H1 (cell line): ENCODE measurements at regions of chr2 and their contacts with region 1.

Region 1: DNA sequence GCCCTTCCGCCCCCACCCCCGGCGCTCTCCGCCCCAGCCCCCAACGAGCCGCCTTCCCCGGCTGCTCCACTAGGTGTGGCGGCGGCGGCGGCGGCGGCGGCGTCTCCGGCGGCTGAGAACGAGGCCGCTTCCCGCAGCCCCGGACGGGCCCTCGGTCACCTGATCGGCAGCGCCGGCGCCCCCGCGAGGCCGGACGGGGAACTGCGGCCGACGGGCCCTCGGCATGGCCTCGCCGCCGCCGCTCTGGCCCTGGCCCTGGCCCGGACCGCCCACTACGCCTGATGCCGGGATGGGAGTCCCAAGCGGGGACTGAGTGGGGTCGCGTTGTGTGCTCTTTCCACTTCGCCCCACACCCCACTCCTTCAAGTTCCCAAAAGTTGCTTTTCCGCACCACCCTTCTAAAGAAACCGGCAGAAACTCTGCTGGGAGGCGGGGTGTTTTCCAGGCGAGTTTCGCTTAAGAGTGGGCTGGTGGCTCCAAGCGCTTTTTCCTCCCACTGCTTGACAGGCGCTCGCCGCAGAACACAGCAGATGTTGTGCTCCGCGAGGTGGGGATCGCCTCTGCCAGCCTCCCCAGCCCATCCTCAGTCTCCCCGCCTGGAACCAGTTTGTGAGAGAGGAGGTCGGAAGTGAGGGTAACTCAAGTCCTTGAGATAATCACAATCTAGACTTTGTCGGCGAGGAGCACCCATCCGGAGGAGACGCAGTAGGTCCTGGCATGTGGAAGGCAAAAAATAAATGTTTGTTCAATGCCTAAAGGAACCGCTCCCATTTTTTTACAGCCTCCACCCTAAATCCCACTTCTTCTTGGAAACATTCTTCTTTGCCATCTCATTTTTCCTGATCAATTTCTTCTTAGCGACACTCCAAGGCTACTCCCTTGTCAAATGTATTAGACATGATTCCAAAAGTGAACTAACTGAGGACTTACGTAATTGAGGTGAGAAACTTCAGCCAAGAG is at the start of gene NCKAP1:
- DNase-seq: peak; percentile 44 to 99
- H3K4me3 ChIP-seq: peak within 1 kb of the TSS; percentile 80 to 96 (median 90)
- H3K27ac ChIP-seq: peak within 1 kb of the TSS; percentile 79
- H3K4me1 ChIP-seq: peaks cover 0 to 3% (median 1%) of the 10 kb centered on the region in 4 experiments; a peak in 3 of 7 replicates
- H3K27me3 ChIP-seq: no peaks in the 10 kb centered on the region
- CTCF ChIP-seq: peak; percentile 68 to 91 (median 74)
- EP300 ChIP-seq: no peak
- POLR2A ChIP-seq: peak in 1 of 2 experiments; percentile 16
- RAD21 ChIP-seq: peak; percentile 8 to 55; a peak in 3 of 4 replicates
- total RNA-seq, gene NCKAP1: 153 and 173 TPM in 2 replicates

Region 2: DNA sequence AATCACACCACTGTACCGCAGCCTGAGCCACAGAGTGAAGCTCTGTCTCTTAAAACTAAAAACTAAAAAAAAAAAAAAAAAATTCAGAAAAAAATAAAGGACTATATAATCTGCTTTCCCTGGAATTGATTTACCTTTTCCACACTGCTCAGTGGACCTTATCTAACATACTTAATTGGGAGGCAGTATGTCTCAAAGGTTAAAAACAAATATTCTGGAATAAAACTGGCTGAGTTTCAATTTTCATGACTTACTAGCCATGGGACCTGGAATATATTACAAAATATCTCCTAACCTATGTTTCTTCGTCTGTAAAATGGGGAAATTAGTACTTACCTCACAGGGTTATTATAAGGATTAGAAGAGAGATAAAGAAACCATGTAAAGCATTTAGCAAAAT is 12.2 kb before region 1 on chr2:
- CTCF ChIA-PET with region 1: interaction called, 13 read pairs
- POLR2A ChIA-PET with region 1: interaction called, 5 read pairs
- DNase-seq: no peak
- H3K4me3 ChIP-seq: no peak overlapping the region
- H3K27ac ChIP-seq: no peak overlapping the region
- H3K4me1 ChIP-seq: peaks cover 0 to 2% (median 0%) of the 10 kb centered on the region in 4 experiments; a peak in 2 of 7 replicates
- H3K27me3 ChIP-seq: no peaks in the 10 kb centered on the region
- CTCF ChIP-seq: no peak
- EP300 ChIP-seq: no peak
- POLR2A ChIP-seq: no peak
- RAD21 ChIP-seq: no peak

Region 3: DNA sequence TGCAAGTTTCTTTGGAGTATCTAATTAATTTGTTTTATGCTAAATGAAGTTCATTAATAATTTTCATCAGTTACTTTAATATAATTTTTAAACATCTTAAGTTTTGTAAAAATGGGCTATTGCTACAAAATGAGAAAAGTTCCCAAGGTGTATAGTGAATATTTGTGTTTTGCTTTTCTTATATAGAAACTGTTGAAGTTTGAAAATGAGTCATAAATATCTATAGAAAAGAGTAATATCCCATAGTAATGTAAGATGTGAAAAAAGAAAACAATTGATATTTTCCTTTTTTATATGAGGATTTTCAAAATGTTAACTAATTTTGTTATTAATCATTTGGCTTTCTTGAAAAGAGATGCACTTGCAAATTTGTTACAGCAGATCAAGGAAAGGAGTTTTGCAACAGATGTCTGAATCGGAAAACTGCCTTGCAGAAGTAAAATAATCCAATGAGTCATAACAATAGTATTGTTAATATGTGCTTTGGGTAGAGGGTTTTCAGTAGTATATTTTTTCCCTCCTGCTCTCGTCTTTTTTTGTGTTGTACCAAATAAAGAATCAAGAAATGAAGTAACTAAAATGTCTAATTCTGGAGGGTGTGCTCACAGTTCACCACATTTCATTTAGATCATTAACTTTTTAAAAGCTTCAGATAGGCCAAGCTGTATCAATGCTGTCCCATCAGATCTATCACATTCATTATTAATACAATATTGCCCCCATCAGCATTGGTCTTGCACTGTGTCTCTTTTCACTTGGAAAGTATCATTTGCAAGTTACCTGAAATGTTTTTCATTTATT is 55.4 kb after region 1 on chr2:
- CTCF ChIA-PET with region 1: no interaction called
- POLR2A ChIA-PET with region 1: no interaction called
- DNase-seq: no peak
- H3K4me3 ChIP-seq: no peak overlapping the region
- H3K27ac ChIP-seq: no peak overlapping the region
- H3K4me1 ChIP-seq: peaks cover 0 to 4% (median 2%) of the 10 kb centered on the region in 4 experiments; a peak in 2 of 7 replicates
- H3K27me3 ChIP-seq: no peaks in the 10 kb centered on the region
- CTCF ChIP-seq: no peak
- EP300 ChIP-seq: no peak
- POLR2A ChIP-seq: no peak
- RAD21 ChIP-seq: peak in 1 of 2 experiments; percentile 28; a peak in 2 of 4 replicates